ENCODE measurements at regions of chr5 and their contacts with region 1.

Region 1: GRCh38 chr5:126499853-126500342 is 76.7 kb downstream of the GRAMD2B start:
- DNase-seq: no peak
- ATAC-seq: peak; percentile 86
- H3K4me3 Mint-ChIP-seq: no peak overlapping the region
- H3K27ac Mint-ChIP-seq: no peak overlapping the region
- H3K4me1 Mint-ChIP-seq: peaks cover 10% of the 10 kb centered on the region
- H3K27me3 Mint-ChIP-seq: no peaks in the 10 kb centered on the region
- CTCF ChIP-seq: peak; percentile 60

Region 2: GRCh38 chr5:126348855-126349635 is 150.9 kb before region 1 on chr5:
- CTCF ChIA-PET with region 1: interaction called, 24 read pairs
- POLR2A ChIA-PET with region 1: no interaction called
- DNase-seq: no peak
- ATAC-seq: peak; percentile 68
- H3K4me3 Mint-ChIP-seq: peak overlapping the region; percentile 5; the same call in 1 of the 2 replicates
- H3K27ac Mint-ChIP-seq: peak overlapping the region; percentile 51
- H3K4me1 Mint-ChIP-seq: peaks cover 25% of the 10 kb centered on the region
- H3K27me3 Mint-ChIP-seq: no peaks in the 10 kb centered on the region
- CTCF ChIP-seq: no peak

Region 3: GRCh38 chr5:126512451-126512850 is 12.6 kb after region 1 on chr5:
- CTCF ChIA-PET with region 1: interaction called, 26 read pairs
- POLR2A ChIA-PET with region 1: no interaction called
- DNase-seq: no peak
- ATAC-seq: no peak
- H3K4me3 Mint-ChIP-seq: no peak overlapping the region
- H3K27ac Mint-ChIP-seq: no peak overlapping the region
- H3K4me1 Mint-ChIP-seq: peaks cover 19% of the 10 kb centered on the region
- H3K27me3 Mint-ChIP-seq: no peaks in the 10 kb centered on the region
- CTCF ChIP-seq: no peak

Region 4: DNA sequence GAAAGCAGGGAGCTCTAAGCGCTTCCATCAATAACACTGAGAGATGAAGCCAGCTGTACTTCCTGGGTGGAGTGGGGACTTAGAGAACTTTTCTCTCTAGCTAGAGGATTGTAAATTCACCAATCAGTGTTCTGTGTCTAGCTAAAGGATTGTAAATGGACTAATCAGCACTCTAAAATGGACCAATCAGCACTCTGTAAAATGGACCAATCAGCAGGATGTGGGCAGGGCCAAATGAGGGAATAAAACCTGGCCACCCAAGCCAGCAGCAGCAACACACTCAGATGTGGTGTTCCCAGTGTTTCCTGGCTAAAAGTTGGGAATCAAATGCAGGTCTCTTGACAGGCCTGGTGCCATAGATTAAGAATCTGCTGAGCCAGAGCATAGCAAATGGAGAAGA is 34.6 kb after region 1 on chr5:
- CTCF ChIA-PET with region 1: interaction called, 15 read pairs
- POLR2A ChIA-PET with region 1: no interaction called
- DNase-seq: no peak
- ATAC-seq: no peak
- H3K4me3 Mint-ChIP-seq: no peak overlapping the region
- H3K27ac Mint-ChIP-seq: no peak overlapping the region
- H3K4me1 Mint-ChIP-seq: peaks cover 7% of the 10 kb centered on the region
- H3K27me3 Mint-ChIP-seq: no peaks in the 10 kb centered on the region
- CTCF ChIP-seq: no peak

Measured in WTC11 (cell line).